SK-N-SH (cell line): ENCODE measurements at regions of chr17 and their contacts with region 1.

Region 1: GRCh38 chr17:55513885-55514591 is 2.8 kb upstream of the SMIM36 start:
- DNase-seq: peak; percentile 73
- H3K4me3 ChIP-seq: peak overlapping the region in 1 of 2 experiments; percentile 13; a peak in 1 of 4 replicates
- H3K27ac ChIP-seq: no peak overlapping the region
- H3K4me1 ChIP-seq: peaks cover 0 to 4% of the 10 kb centered on the region in 2 experiments; a peak in 2 of 4 replicates
- H3K27me3 ChIP-seq: peaks cover 19% of the 10 kb centered on the region; the same call in 1 of the 2 replicates
- CTCF ChIP-seq: peak; percentile 100
- EP300 ChIP-seq: no peak; a peak in 1 of 4 replicates
- RAD21 ChIP-seq: peak; percentile 99

Region 2: GRCh38 chr17:55334285-55334684 is 179.8 kb before region 1 on chr17:
- CTCF ChIA-PET with region 1: interaction called, 11 read pairs
- POLR2A ChIA-PET with region 1: no interaction called
- DNase-seq: no peak
- H3K4me3 ChIP-seq: no peak overlapping the region
- H3K27ac ChIP-seq: no peak overlapping the region
- H3K4me1 ChIP-seq: peaks cover 0 to 9% of the 10 kb centered on the region in 2 experiments; a peak in 1 of 4 replicates
- H3K27me3 ChIP-seq: no peaks in the 10 kb centered on the region
- CTCF ChIP-seq: no peak
- EP300 ChIP-seq: 0 out of 4 replicates have a peak, but pooled peaks of 1 of the 2 experiments have one; percentile 1
- RAD21 ChIP-seq: no peak

Region 3: DNA sequence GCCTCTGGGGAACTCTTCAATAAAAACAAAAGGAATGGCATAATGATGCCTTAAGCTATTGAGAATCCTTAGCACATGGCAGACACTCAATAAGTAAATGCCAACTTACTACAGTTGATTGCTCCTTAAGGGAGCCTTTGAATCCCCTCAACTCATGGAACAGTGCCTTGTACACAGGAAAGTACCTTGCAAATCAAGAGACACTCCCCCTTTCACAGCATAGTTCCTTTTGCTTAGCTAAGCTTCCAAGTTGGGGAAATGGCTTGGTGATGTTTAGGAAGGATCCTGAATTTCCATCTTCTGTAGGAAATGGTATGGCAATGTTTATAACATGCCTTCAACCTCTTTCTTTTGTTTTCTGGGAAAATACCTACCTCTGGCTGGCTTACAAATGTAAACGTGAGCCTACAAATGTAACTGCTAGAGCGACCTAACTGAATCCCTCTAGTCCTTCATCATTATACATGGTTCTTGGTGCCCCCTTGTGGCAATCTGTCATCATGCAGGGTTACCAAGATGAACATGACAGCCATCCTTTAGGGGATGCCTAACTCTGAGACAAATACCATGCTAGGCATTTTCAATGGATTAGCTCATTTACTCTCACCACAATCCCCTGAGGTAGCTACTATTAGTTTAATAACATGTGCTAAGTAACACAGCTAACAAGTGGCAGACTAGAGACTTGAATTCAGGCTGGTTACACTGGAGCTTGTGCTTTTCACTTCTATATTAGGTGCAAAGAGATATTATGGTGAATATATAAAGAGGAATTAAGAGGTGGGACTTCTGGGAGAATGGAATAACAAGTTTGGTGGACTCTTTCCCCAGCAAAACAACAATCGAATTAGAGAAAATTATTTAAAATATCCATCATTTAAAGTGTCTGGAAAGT is 157.4 kb before region 1 on chr17:
- CTCF ChIA-PET with region 1: interaction called, 105 read pairs
- POLR2A ChIA-PET with region 1: no interaction called
- DNase-seq: peak; percentile 74
- H3K4me3 ChIP-seq: no peak overlapping the region
- H3K27ac ChIP-seq: no peak overlapping the region
- H3K4me1 ChIP-seq: no peaks in the 10 kb centered on the region; a peak in 1 of 4 replicates
- H3K27me3 ChIP-seq: no peaks in the 10 kb centered on the region
- CTCF ChIP-seq: peak; percentile 97
- EP300 ChIP-seq: peak in 1 of 2 experiments; percentile 38; a peak in 1 of 4 replicates
- RAD21 ChIP-seq: peak; percentile 88

Region 4: DNA sequence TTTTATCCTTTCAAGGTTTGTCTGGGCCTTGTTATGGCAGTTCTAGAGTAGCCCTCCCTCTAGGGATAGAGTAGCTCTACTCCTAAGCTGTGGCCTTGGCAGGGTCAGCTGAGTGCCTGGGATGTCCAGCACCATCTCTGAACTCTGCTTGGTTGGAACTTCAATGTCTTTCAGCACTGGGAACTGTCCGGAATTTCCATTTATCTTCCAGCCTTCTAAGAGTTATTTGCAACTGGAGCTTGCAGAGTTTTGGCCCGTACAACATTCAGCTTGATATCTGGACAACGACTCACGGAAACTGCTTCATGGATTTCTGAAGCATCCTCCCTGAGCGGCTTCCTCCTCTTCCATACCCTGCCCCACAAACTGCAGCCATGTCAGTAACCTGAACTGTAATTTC is 115.3 kb before region 1 on chr17:
- CTCF ChIA-PET with region 1: interaction called, 17 read pairs
- POLR2A ChIA-PET with region 1: no interaction called
- DNase-seq: no peak
- H3K4me3 ChIP-seq: no peak overlapping the region
- H3K27ac ChIP-seq: no peak overlapping the region
- H3K4me1 ChIP-seq: no peaks in the 10 kb centered on the region; a peak in 1 of 4 replicates
- H3K27me3 ChIP-seq: no peaks in the 10 kb centered on the region
- CTCF ChIP-seq: no peak
- EP300 ChIP-seq: no peak
- RAD21 ChIP-seq: no peak

Region 5: DNA sequence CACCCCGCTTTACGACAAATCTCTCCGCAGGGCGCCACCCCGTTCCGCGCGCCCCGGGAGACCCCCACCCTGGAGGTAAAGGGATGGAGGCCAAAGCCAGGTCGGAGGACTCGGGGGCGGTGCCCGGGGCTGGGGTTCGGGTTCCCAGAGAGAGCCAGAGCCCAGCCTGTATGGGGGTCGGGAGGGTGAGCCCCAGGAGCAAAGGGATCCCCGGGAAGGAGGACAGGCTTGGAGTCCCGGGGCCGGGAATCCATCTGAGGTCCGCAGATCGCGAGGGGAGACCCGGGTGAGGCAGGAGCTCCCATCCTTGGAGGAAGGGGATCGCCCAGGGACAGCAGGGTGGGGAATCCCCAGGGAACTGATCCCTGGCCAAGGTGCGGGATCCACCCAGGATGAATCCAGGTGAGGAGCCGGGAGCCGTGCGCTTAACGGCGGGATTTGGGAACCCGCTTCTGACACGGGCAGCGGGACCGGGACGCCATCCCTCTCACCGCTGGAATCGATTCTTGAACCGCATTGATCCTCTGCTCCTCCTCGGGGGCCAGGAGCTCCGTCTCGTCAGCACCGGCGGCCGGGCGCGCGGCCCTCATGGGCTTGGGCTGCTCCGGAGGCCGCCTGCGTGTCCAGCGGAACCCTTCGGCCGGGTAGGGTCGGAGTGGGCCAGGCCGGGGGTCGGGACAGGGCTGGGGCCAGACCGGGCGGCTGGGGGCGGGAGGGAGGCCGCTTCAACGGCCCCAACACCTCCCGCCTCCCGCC is 92.7 kb before region 1 on chr17 and contains the start of gene MMD:
- CTCF ChIA-PET with region 1: interaction called, 12 read pairs
- POLR2A ChIA-PET with region 1: interaction called, 4 read pairs
- DNase-seq: peak; percentile 86
- H3K4me3 ChIP-seq: peak within 1 kb of the TSS; percentile 90 to 96
- H3K27ac ChIP-seq: peak within 1 kb of the TSS; percentile 47 to 90
- H3K4me1 ChIP-seq: peaks cover 6 to 8% of the 10 kb centered on the region in 2 experiments; a peak in 3 of 4 replicates
- H3K27me3 ChIP-seq: peaks cover 17% of the 10 kb centered on the region; the same call in 1 of the 2 replicates
- CTCF ChIP-seq: no peak
- EP300 ChIP-seq: no peak
- RAD21 ChIP-seq: no peak
- polyA plus RNA-seq, gene MMD: 10.9 and 11.7 TPM in 2 replicates

Region 6: DNA sequence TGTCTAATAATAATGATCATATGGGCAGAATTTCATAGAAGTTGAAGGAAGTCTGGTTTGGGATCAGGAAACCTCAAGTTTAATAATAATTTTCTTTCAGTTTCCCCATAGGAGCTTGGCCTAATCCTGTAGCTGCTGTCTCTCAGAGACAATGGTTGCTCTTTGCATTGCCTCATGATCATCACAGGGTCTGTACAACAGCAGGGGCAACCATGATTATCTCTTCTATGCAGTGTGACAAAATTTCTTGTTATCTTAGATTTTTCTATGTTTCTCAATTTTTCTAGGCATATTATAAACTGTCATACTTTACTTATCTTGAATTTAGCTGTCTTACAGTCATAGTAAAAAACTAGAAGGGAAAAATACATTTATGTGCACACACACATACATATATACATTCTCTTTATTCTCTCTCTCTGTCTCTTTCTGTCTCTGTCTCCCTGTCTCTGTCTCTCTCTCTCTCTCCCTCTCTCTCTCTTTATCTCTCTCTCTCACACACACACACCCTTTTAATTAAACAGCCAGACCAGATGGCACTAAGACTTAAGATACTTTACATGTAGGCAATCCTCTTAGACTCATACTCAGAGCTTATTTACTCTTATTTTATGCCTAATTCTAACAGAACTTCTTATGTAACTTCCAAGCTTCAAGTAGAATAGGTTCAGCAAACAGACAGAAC is 33.3 kb before region 1 on chr17:
- CTCF ChIA-PET with region 1: interaction called, 10 read pairs
- POLR2A ChIA-PET with region 1: no interaction called
- DNase-seq: no peak
- H3K4me3 ChIP-seq: no peak overlapping the region
- H3K27ac ChIP-seq: no peak overlapping the region
- H3K4me1 ChIP-seq: peaks cover 0 to 2% of the 10 kb centered on the region in 2 experiments; a peak in 1 of 4 replicates
- H3K27me3 ChIP-seq: no peaks in the 10 kb centered on the region
- CTCF ChIP-seq: no peak
- EP300 ChIP-seq: no peak
- RAD21 ChIP-seq: no peak